Vagina (tissue), 2 donors: ENCODE measurements at regions of chr15 and their contacts with region 1.

Region 1: GRCh38 chr15:43776718-43777583 is at the start of gene ELL3:
- DNase-seq: no peak
- H3K4me3 ChIP-seq: peak within 1 kb of the TSS; percentile 72 to 77
- H3K27ac ChIP-seq: peak within 1 kb of the TSS; percentile 88
- H3K4me1 ChIP-seq: peaks cover 22% of the 10 kb centered on the region
- H3K27me3 ChIP-seq: no peaks in the 10 kb centered on the region
- CTCF ChIP-seq: peak in 2 of 3 experiments; percentile 76 to 92
- POLR2A ChIP-seq: peak in 1 of 2 donors; percentile 14
- total RNA-seq, gene ELL3: 15.0 TPM

Region 2: GRCh38 chr15:43791993-43792760 is 15.2 kb after region 1 on chr15 and contains the start of gene SERF2:
- intact Hi-C with region 1: loop called (anchors 2 kb)
- DNase-seq: peak; percentile 100
- H3K4me3 ChIP-seq: peak within 1 kb of the TSS; percentile 82 to 91
- H3K27ac ChIP-seq: peak within 1 kb of the TSS; percentile 99
- H3K4me1 ChIP-seq: peaks cover 34% of the 10 kb centered on the region
- H3K27me3 ChIP-seq: no peaks in the 10 kb centered on the region
- CTCF ChIP-seq: no peak
- POLR2A ChIP-seq: peak; percentile 89 to 99
- total RNA-seq, gene SERF2: 564 TPM